Panc1 (cell line): ENCODE measurements at regions of chr2 and their contacts with region 1.

Region 1: GRCh38 chr2:197152451-197153228 is 157.9 kb downstream of the ANKRD44 start:
- DNase-seq: peak; percentile 72
- ATAC-seq: peak; percentile 89
- H3K4me3 ChIP-seq: no peak overlapping the region
- H3K27ac ChIP-seq: no peak overlapping the region
- H3K4me1 ChIP-seq: no peaks in the 10 kb centered on the region; the same call in 1 of the 2 replicates
- H3K27me3 ChIP-seq: no peaks in the 10 kb centered on the region
- CTCF ChIP-seq: peak; percentile 11; the same call in 1 of the 2 replicates

Region 2: GRCh38 chr2:196123679-196124373 is 1028.8 kb before region 1 on chr2:
- CTCF ChIA-PET with region 1: interaction called, 13 read pairs
- POLR2A ChIA-PET with region 1: no interaction called
- in situ Hi-C with region 1: no loop called
- intact Hi-C with region 1: no loop called
- DNase-seq: no peak
- ATAC-seq: peak; percentile 51; the same call in 1 of the 2 replicates
- H3K4me3 ChIP-seq: no peak overlapping the region
- H3K27ac ChIP-seq: no peak overlapping the region
- H3K4me1 ChIP-seq: no peaks in the 10 kb centered on the region
- H3K27me3 ChIP-seq: no peaks in the 10 kb centered on the region
- CTCF ChIP-seq: no peak